AG04450 (cell line): ENCODE measurements at regions of chr13 and their contacts with region 1.

Region 1: DNA sequence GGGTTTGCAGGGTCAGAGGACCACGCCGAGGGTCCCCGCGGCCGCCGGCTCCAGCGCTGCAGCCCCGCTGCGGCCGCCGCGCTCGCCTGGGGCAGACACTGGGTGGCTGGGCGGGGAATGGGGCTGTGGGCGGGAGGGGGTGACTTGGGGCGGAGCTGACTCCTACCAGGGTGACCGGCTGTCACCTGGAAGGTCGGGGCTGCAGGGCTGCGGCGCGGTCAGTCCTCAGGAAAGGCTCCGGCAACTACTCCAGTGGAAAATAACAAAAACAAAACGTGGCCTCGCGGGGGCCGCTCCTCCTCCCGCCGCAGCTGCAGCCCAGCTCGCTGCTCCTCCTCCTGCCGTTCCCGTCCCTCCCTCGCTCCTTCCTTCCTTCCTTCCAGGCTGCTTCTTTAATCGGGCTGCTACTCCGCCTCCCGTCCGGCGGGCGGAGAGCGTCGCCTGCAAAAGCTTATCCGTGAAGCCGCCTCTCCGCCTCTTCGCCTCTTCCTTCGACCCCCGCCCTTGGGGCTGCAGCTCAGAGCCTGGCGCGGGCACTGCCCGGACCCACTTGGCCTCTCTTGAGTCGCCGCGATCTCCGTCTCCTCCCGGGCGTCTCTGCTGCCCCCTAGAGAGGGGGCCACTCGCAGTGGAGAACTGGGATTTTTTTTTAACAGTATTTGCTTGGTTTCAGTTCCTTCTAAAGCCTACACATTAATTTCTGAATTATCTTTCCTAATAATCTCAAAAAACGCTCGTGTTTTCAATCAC is at the start of gene TBC1D4:
- DNase-seq: peak; percentile 67
- H3K4me3 ChIP-seq: peak within 1 kb of the TSS; percentile 72
- H3K27ac ChIP-seq: peak within 1 kb of the TSS; percentile 60
- H3K27me3 ChIP-seq: no peaks in the 10 kb centered on the region
- CTCF ChIP-seq: peak; percentile 94
- polyA plus RNA-seq, gene TBC1D4: 8.0 TPM in 2 replicates

Region 2: DNA sequence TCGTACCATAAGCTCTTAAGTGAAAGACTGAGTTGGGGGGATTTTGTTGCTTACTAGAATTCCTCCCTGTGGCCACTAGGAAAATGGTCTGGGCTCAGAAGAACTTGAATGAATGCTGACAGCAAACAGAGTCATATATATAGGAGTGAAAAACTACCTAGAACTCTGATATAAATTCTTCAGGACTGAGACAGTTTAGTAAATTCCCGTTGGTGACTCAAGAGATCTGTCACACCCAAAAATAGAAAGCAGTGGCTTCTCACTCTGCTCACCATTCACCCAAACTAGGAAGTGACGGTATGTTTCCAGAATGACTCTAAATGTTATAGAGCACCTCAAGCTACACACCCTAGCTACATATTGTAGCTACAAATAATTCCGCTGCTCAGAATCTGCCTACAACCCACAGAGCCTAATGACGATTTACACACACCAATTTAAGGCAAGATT is 116.5 kb before region 1 on chr13:
- CTCF ChIA-PET with region 1: interaction called, 30 read pairs
- POLR2A ChIA-PET with region 1: no interaction called
- DNase-seq: peak; percentile 29
- H3K4me3 ChIP-seq: no peak overlapping the region; the same call in 1 of the 2 replicates
- H3K27ac ChIP-seq: no peak overlapping the region
- H3K27me3 ChIP-seq: no peaks in the 10 kb centered on the region
- CTCF ChIP-seq: peak; percentile 13; the same call in 1 of the 2 replicates

Region 3: GRCh38 chr13:75402787-75403186 is 79.5 kb before region 1 on chr13:
- CTCF ChIA-PET with region 1: interaction called, 12 read pairs
- POLR2A ChIA-PET with region 1: no interaction called
- DNase-seq: no peak
- H3K4me3 ChIP-seq: no peak overlapping the region
- H3K27ac ChIP-seq: no peak overlapping the region
- H3K27me3 ChIP-seq: no peaks in the 10 kb centered on the region
- CTCF ChIP-seq: no peak

Region 4: GRCh38 chr13:75454497-75454896 is 27.7 kb before region 1 on chr13:
- CTCF ChIA-PET with region 1: interaction called, 12 read pairs
- POLR2A ChIA-PET with region 1: interaction called, 4 read pairs
- DNase-seq: no peak
- H3K4me3 ChIP-seq: no peak overlapping the region
- H3K27ac ChIP-seq: no peak overlapping the region
- H3K27me3 ChIP-seq: no peaks in the 10 kb centered on the region
- CTCF ChIP-seq: no peak

Region 5: GRCh38 chr13:75495938-75496337 is 13.7 kb after region 1 on chr13:
- CTCF ChIA-PET with region 1: interaction called, 26 read pairs
- POLR2A ChIA-PET with region 1: interaction called, 4 read pairs
- DNase-seq: peak; percentile 72
- H3K4me3 ChIP-seq: no peak overlapping the region
- H3K27ac ChIP-seq: peak overlapping the region; percentile 80
- H3K27me3 ChIP-seq: no peaks in the 10 kb centered on the region
- CTCF ChIP-seq: no peak

Region 6: GRCh38 chr13:75537401-75538365 is 55.4 kb after region 1 on chr13 and contains the start of gene COMMD6:
- CTCF ChIA-PET with region 1: interaction called, 37 read pairs
- POLR2A ChIA-PET with region 1: interaction called, 13 read pairs
- DNase-seq: peak; percentile 96
- H3K4me3 ChIP-seq: peak within 1 kb of the TSS; percentile 81
- H3K27ac ChIP-seq: peak within 1 kb of the TSS; percentile 69
- H3K27me3 ChIP-seq: no peaks in the 10 kb centered on the region
- CTCF ChIP-seq: peak; percentile 58
- polyA plus RNA-seq, gene COMMD6: 236 and 351 TPM in 2 replicates